AG04449 (cell line): ENCODE measurements at regions of chr20 and their contacts with region 1.

Region 1: DNA sequence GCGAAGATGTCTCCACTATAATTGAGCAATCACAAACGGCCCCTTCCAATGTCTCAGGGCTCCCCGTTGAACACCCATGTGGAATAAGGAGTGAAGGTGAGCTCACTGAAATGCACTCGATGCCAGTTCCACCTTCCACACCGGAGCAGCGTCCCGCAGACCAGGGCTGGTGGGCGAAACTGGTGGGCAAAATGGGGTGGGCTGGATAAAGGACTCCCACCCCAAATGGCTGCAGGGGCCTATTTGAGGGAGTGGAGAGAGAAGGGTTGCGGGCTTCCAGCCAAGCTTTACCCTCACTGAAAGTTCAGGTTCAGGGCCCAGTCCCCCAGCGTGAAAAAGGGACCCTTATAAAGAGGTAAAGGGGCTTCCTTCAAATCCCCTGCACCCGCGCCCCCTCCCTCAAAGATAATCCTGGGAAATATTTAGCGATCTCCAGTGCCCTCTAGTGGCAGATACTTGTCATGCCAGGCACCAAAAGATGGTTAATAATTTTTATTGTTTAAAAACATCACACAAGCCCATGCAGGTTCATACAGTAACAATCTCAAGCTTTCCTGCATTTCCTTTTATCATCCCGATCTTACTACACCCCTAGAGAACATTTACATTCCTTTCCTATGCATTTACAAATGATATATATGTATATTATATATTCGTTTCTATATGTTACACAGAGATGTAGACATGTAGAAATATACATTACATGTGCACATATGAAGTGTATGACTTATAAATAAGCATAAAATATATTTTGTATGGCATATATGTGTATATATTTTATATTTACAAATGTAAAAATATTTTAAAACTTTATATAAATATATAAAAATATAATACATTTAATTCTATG is 58.2 kb upstream of the NKX2-2 start:
- DNase-seq: no peak
- H3K4me3 ChIP-seq: no peak overlapping the region
- CTCF ChIP-seq: peak; percentile 73

Region 2: GRCh38 chr20:20837574-20838021 is 734.5 kb before region 1 on chr20:
- CTCF ChIA-PET with region 1: interaction called, 36 read pairs
- POLR2A ChIA-PET with region 1: no interaction called
- DNase-seq: no peak
- H3K4me3 ChIP-seq: no peak overlapping the region
- CTCF ChIP-seq: peak; percentile 60

Region 3: DNA sequence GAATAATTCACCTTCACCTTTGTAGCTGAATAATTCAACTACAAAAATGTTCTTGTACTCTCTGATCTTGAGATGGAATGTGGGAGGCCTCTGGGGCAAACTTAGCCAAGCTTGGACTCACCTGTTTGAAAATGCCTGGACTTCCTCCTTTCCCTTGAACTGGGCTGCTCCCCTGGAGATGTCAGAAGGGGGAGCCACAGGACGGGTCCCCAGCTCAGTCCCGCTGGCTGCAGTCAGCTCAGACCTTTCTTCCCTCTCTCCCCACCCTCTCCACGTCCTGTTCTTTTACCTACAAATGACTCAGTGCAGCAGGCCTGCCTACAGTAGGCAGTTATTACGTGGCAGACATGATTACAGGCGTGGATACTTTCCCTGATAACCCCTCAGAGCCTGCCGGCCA is 728.1 kb before region 1 on chr20:
- CTCF ChIA-PET with region 1: interaction called, 36 read pairs
- POLR2A ChIA-PET with region 1: no interaction called
- DNase-seq: no peak
- H3K4me3 ChIP-seq: no peak overlapping the region
- CTCF ChIP-seq: no peak

Region 4: DNA sequence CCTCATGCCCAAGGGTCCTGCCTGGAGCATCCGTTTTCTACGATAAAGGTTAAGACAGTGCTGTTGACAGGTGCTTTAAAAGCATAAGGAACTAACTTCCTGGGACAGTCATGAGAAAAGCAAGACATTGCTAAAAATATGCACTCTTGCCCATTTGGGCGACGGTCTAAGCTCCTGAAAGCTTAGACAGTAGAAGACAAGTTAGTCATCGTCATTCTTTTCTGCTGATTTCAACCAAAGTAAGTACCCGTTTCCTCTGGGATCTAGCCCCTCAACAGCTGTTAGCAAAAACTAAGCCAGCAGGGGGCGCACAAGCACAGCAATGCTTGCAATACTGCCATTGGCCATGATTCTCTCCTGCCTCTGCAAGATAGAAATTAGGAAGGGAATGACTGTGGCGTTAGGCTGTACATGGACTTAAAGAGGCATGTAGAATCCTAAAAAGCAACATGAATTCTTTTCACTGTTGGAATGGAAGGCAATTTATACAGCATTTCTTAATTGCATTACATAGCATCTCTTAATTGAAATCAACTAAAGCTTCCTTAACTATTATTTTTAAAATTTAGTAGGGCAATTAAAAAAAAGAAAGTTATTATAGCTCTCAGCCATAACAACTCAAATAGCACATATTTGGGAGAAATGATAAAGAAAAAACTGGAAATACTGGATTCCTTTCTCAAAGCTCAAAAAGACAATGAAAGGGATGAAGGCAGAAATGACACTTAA is 711.8 kb before region 1 on chr20:
- CTCF ChIA-PET with region 1: interaction called, 16 read pairs
- POLR2A ChIA-PET with region 1: no interaction called
- DNase-seq: peak; percentile 40
- H3K4me3 ChIP-seq: no peak overlapping the region
- CTCF ChIP-seq: peak; percentile 77

Region 5: DNA sequence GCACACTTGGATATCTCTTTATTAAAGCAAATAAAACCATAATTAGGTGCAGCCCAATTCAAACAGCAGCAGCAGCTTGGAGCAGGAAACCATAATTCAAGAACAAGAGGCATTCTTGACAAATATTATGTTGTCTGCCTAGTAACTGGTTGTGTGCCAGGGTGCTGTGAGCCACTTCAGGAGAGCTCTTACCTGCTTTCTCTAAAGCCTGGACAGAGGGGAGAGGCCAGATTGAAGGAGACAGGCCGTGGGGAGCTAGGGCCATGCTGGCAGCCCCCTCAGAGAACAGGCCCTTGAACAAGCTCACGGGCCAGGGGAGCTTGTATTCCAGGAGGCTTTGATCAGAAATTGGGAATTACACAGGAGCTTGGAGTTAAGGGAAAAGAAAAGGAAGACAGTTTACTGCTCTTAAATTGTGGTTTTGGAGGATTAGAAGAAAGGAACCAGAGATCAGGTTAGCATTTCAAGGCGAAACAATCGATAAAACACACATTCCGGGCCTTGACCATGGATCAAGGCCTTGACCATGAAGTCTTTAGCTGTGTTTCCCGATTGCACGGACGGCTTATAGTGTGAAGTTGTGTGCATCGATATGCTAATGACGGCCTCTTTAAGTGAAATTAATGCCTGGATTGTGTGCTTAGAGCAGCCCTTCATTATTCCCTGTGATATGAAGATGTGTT is 11.6 kb after region 1 on chr20:
- CTCF ChIA-PET with region 1: interaction called, 10 read pairs
- POLR2A ChIA-PET with region 1: no interaction called
- DNase-seq: no peak
- H3K4me3 ChIP-seq: no peak overlapping the region
- CTCF ChIP-seq: no peak

Region 6: GRCh38 chr20:21615617-21616080 is 43.6 kb after region 1 on chr20:
- CTCF ChIA-PET with region 1: interaction called, 13 read pairs
- POLR2A ChIA-PET with region 1: no interaction called
- DNase-seq: peak; percentile 3
- H3K4me3 ChIP-seq: no peak overlapping the region
- CTCF ChIP-seq: peak; percentile 87